Uterus (tissue), 4 donors: ENCODE measurements at regions of chr2 and their contacts with region 1.

Region 1: DNA sequence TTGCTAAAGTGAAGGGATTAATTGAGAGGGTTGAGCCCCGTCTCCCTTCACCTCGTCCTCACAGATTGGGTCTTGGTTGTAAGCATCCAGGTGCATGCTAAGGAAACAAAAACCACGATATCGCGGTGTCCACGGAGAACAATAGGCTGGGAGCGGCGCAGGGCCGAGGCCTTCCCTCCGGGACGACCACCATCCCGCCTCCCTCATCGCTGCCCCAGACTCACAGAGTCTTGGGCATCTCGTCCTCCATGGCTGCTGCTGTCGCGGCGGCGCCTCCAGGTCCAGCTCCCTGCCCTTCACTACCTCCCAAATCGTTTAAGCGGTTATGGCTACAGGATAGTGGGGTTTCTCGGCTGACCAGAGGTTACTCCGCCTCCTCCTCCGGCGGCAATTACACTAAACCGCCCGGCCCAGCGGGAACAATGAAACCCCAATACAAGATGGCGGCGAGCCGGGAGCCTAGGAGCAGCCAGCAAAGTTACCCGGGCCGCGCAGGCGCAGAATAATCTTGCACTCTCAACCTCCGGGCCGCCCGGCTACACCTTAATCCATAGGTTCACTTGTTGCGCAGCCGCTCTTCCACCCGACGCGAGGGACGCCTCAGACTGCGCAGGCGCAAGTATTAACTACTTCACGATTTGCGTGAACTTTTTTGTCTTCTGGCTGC is at the start of gene TIA1:
- DNase-seq: peak; percentile 97 to 99
- H3K4me3 ChIP-seq: peak within 1 kb of the TSS; percentile 79 to 96
- H3K27ac ChIP-seq: peak within 1 kb of the TSS; percentile 98 to 99
- H3K4me1 ChIP-seq: no peaks in the 10 kb centered on the region
- H3K27me3 ChIP-seq: no peaks in the 10 kb centered on the region
- CTCF ChIP-seq: peak in 1 of 4 experiments; percentile 5
- POLR2A ChIP-seq: peak; percentile 52 to 75
- total RNA-seq, gene TIA1: 86.8 to 514 (median 151) TPM

Region 2: GRCh38 chr2:70190418-70191243 is 57.7 kb before region 1 on chr2 and contains the start of gene C2orf42:
- intact Hi-C with region 1: loop called (anchors 5 kb)
- DNase-seq: peak; percentile 96 to 97
- H3K4me3 ChIP-seq: peak within 1 kb of the TSS; percentile 88 to 91
- H3K27ac ChIP-seq: peak within 1 kb of the TSS; percentile 97 to 99
- H3K4me1 ChIP-seq: no peaks in the 10 kb centered on the region
- H3K27me3 ChIP-seq: no peaks in the 10 kb centered on the region
- CTCF ChIP-seq: peak in 2 of 4 experiments; percentile 19
- POLR2A ChIP-seq: peak; percentile 68 to 94
- total RNA-seq, gene C2orf42: 10.3 to 45.7 (median 23.8) TPM